Panc1 (cell line): ENCODE measurements at regions of chr1 and their contacts with region 1.

Region 1: GRCh38 chr1:19485362-19486187 is at the start of gene CAPZB:
- DNase-seq: no peak
- ATAC-seq: peak; percentile 92
- H3K4me3 ChIP-seq: peak within 1 kb of the TSS; percentile 88 to 95
- H3K27ac ChIP-seq: peak within 1 kb of the TSS; percentile 96
- H3K4me1 ChIP-seq: peaks cover 48% of the 10 kb centered on the region
- H3K27me3 ChIP-seq: no peaks in the 10 kb centered on the region
- CTCF ChIP-seq: no peak
- total RNA-seq, gene CAPZB: 491 TPM

Region 2: DNA sequence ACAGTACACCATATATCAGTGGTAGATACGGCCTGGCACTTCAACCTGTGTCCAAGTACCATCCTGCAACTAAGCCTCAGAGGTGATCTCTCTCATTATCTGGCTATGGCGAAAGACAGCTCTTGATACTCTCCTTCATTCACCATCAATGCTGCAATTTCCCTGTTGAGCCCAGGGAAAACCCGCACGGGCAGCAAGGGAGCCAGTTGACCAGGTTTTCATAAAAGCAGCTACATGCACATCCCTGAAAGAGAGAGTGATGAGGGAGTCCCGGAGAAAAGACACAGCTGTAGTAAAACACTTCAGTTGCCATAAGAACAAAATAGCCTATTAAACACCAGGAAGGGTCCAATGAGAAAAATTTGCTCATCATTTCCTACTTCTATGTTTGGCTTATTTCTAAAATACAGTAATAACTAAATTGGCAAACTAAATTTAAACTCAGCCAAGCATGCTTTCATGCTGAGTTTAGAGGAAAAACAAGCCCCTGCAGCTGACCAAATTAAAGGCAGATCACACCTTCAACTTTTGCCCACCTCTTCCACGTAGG is 68.6 kb before region 1 on chr1:
- CTCF ChIA-PET with region 1: interaction called, 3 read pairs
- POLR2A ChIA-PET with region 1: interaction called, 13 read pairs
- in situ Hi-C with region 1: no loop called
- intact Hi-C with region 1: no loop called
- DNase-seq: no peak
- ATAC-seq: no peak
- H3K4me3 ChIP-seq: no peak overlapping the region
- H3K27ac ChIP-seq: no peak overlapping the region
- H3K4me1 ChIP-seq: peaks cover 43% of the 10 kb centered on the region
- H3K27me3 ChIP-seq: no peaks in the 10 kb centered on the region
- CTCF ChIP-seq: no peak

Region 3: GRCh38 chr1:19439464-19440171 is 46.0 kb before region 1 on chr1:
- CTCF ChIA-PET with region 1: no interaction called
- POLR2A ChIA-PET with region 1: no interaction called
- in situ Hi-C with region 1: no loop called
- intact Hi-C with region 1: no loop called
- DNase-seq: no peak
- ATAC-seq: no peak
- H3K4me3 ChIP-seq: no peak overlapping the region
- H3K27ac ChIP-seq: peak overlapping the region; percentile 99
- H3K4me1 ChIP-seq: peaks cover 97% of the 10 kb centered on the region
- H3K27me3 ChIP-seq: no peaks in the 10 kb centered on the region
- CTCF ChIP-seq: peak; percentile 66; the same call in 1 of the 2 replicates

Region 4: GRCh38 chr1:19512545-19512944 is 27.0 kb after region 1 on chr1:
- CTCF ChIA-PET with region 1: no interaction called
- POLR2A ChIA-PET with region 1: no interaction called
- in situ Hi-C with region 1: no loop called
- intact Hi-C with region 1: no loop called
- DNase-seq: no peak
- ATAC-seq: no peak
- H3K4me3 ChIP-seq: no peak overlapping the region
- H3K27ac ChIP-seq: no peak overlapping the region
- H3K4me1 ChIP-seq: no peaks in the 10 kb centered on the region
- H3K27me3 ChIP-seq: no peaks in the 10 kb centered on the region
- CTCF ChIP-seq: no peak

Region 5: DNA sequence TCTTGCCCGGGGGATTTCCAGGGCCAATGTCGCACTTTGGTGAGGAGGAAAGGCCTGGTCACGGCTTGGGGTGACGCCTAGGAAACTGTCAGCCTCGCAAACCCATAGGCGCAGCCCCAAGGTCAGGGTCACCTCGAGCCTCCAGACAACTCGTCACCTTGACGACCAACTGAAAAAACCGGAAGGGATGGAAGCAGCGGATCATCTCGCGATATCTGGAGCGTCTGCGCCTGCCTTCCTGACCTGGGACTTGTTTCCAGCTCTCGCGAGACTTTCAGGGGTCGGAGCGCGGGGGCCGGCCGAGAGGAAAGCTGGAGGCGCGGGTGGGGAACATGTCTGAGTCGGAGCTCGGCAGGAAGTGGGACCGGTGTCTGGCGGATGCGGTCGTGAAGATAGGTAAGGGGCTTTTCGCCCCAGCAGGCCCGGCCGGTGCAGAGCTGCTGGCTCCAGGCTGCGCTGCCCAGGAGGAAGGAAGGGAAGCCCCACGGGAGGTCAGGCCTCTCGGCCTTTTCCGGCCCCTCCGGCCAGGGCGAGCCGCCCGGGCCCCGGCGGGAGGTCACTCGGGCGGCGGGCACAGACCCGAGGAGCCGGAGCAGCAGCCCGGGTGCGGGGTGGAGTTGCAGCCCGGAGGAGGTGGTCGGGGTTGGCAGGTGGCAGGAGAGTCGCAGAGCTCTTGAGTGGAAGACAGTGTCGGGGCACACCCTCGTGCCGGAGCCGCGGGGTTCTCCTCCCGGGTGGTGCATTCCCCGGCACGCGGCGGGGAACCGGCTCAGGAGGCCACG is 111.3 kb after region 1 on chr1:
- CTCF ChIA-PET with region 1: interaction called, 3 read pairs
- POLR2A ChIA-PET with region 1: interaction called, 3 read pairs
- in situ Hi-C with region 1: no loop called
- intact Hi-C with region 1: loop called (anchors 10 kb)
- DNase-seq: peak; percentile 94
- ATAC-seq: peak; percentile 96
- H3K4me3 ChIP-seq: peak overlapping the region; percentile 80 to 81
- H3K27ac ChIP-seq: peak overlapping the region; percentile 99
- H3K4me1 ChIP-seq: peaks cover 35% of the 10 kb centered on the region
- H3K27me3 ChIP-seq: no peaks in the 10 kb centered on the region
- CTCF ChIP-seq: no peak